ENCODE measurements at regions of chr15 and their contacts with region 1.

Region 1: DNA sequence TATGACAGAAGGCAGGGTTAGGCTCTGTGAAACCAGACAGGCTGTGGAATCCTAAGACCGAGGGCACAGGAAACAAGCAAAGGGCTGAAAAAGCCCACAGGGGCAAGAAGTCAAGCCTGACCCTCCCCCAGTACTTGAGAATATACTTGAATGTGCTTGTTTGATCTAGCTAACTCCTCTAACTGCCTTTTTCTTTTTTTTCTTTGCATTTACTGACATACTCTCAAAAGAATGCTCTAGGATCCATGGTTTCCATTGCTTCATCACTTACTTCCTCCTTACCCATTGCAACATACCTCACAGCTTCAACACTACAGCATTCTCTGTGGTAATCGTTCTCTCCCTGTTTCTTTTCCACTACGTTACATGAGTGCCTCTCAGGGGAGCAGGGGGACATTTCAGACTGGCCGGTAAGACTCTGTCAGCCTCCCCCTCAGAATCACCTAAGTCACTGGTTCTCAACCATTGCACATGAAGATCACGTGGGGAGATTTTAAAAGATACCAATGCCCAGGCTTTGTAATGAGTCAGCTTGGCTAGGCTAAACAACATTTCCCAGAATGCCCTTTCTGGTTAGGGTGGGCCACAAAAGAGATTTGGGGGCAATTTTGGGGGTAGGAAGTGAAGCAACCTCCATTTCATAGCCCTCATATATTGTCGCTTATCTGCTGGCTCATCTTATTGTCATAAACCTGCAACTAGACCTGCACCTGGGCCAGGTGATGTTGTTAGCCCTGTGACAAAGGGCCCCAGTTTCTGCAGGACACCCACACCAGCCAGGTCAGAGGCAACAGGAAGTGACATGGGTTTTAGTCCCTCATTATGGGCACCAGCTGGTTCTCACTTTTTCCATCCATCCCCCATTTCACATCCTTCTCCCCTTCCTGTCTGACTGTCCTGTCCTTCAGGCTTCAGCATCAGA is 24.6 kb upstream of the RSL24D1 start:
- DNase-seq: peak in 1 of 9 donors; percentile 26
- ATAC-seq: peak; percentile 48
- H3K4me3 ChIP-seq: no peak overlapping the region
- H3K4me3 Mint-ChIP-seq: peak overlapping the region in 5 of 10 donors; percentile 17 to 69 (median 38)
- H3K27ac ChIP-seq: no peak overlapping the region
- H3K27ac Mint-ChIP-seq: peak overlapping the region in 5 of 9 donors; percentile 11 to 87 (median 38)
- H3K4me1 ChIP-seq: peaks cover 43 to 54% of the 10 kb centered on the region in 2 donors
- H3K4me1 Mint-ChIP-seq: peaks cover 44 to 71% (median 51%) of the 10 kb centered on the region in 7 donors
- H3K27me3 ChIP-seq: no peaks in the 10 kb centered on the region
- H3K27me3 Mint-ChIP-seq: no peaks in the 10 kb centered on the region

Region 2: DNA sequence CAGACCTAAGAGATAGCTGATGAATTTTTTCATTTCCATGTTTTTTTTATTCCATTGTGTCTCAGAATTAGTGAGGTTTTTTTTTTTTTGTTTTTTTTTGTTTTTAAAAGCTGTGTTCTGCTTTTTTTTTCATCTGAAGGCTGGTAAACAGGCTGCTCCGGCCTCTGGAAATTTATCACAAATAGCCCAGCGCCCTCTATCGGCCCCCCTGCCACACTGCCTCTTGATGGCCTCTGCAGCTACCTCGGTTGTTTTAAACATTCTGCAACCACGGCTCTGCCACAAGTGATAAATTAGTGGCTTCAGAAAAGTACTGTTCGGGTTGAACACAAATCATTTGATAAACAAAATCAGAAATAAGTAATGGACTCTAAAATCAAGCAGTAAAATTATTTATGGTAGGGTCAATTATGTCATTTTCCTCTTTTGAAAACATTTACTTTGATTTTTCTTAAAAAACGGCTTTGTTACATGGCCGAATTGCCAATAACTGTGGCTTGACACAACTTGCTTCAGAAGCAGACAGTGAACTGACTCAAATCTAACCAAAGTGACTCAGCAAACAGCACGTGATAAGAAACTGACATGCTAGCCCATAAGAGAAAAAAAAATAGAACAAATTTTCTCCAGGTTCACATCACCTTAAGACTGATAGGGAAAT is 112.4 kb before region 1 on chr15:
- CTCF ChIA-PET with region 1: no interaction called
- POLR2A ChIA-PET with region 1: no interaction called
- intact Hi-C with region 1: no loop called
- DNase-seq: peak in 8 of 9 donors; percentile 4 to 54 (median 21)
- ATAC-seq: no peak
- H3K4me3 ChIP-seq: no peak overlapping the region
- H3K4me3 Mint-ChIP-seq: no peak overlapping the region
- H3K27ac ChIP-seq: no peak overlapping the region
- H3K27ac Mint-ChIP-seq: no peak overlapping the region
- H3K4me1 ChIP-seq: no peaks in the 10 kb centered on the region
- H3K4me1 Mint-ChIP-seq: no peaks in the 10 kb centered on the region
- H3K27me3 ChIP-seq: no peaks in the 10 kb centered on the region
- H3K27me3 Mint-ChIP-seq: peaks cover 0 to 8% (median 5%) of the 10 kb centered on the region in 5 donors

Region 3: GRCh38 chr15:55237219-55238130 is 16.1 kb after region 1 on chr15:
- CTCF ChIA-PET with region 1: no interaction called
- POLR2A ChIA-PET with region 1: no interaction called
- intact Hi-C with region 1: no loop called
- DNase-seq: no peak
- ATAC-seq: no peak
- H3K4me3 ChIP-seq: no peak overlapping the region
- H3K4me3 Mint-ChIP-seq: peak overlapping the region in 1 of 10 donors; percentile 44
- H3K27ac ChIP-seq: no peak overlapping the region
- H3K27ac Mint-ChIP-seq: peak overlapping the region in 1 of 9 donors; percentile 71
- H3K4me1 ChIP-seq: peaks cover 7 to 18% of the 10 kb centered on the region in 2 donors
- H3K4me1 Mint-ChIP-seq: peaks cover 6 to 51% (median 20%) of the 10 kb centered on the region in 7 donors
- H3K27me3 ChIP-seq: no peaks in the 10 kb centered on the region
- H3K27me3 Mint-ChIP-seq: no peaks in the 10 kb centered on the region

Region 4: GRCh38 chr15:55255714-55256113 is 34.4 kb after region 1 on chr15:
- CTCF ChIA-PET with region 1: interaction called, 6 read pairs
- POLR2A ChIA-PET with region 1: no interaction called
- intact Hi-C with region 1: loop called (anchors 2 to 5 kb)
- DNase-seq: peak in 2 of 9 donors; percentile 13 to 31
- ATAC-seq: peak; percentile 64
- H3K4me3 ChIP-seq: peak overlapping the region; percentile 56
- H3K4me3 Mint-ChIP-seq: peak overlapping the region; percentile 71 to 86 (median 84)
- H3K27ac ChIP-seq: peak overlapping the region; percentile 54
- H3K27ac Mint-ChIP-seq: peak overlapping the region; percentile 80 to 96 (median 89)
- H3K4me1 ChIP-seq: peaks cover 40 to 62% of the 10 kb centered on the region in 2 donors
- H3K4me1 Mint-ChIP-seq: peaks cover 45 to 67% (median 63%) of the 10 kb centered on the region in 7 donors
- H3K27me3 ChIP-seq: no peaks in the 10 kb centered on the region
- H3K27me3 Mint-ChIP-seq: no peaks in the 10 kb centered on the region

Region 5: GRCh38 chr15:55372701-55373440 is 151.5 kb after region 1 on chr15:
- CTCF ChIA-PET with region 1: no interaction called
- POLR2A ChIA-PET with region 1: no interaction called
- intact Hi-C with region 1: no loop called
- DNase-seq: no peak
- ATAC-seq: no peak
- H3K4me3 ChIP-seq: no peak overlapping the region
- H3K4me3 Mint-ChIP-seq: no peak overlapping the region
- H3K27ac ChIP-seq: no peak overlapping the region
- H3K27ac Mint-ChIP-seq: peak overlapping the region in 3 of 9 donors; percentile 0 to 9 (median 6)
- H3K4me1 ChIP-seq: no peaks in the 10 kb centered on the region
- H3K4me1 Mint-ChIP-seq: peaks cover 0 to 15% (median 0%) of the 10 kb centered on the region in 7 donors
- H3K27me3 ChIP-seq: no peaks in the 10 kb centered on the region
- H3K27me3 Mint-ChIP-seq: no peaks in the 10 kb centered on the region

Region 6: DNA sequence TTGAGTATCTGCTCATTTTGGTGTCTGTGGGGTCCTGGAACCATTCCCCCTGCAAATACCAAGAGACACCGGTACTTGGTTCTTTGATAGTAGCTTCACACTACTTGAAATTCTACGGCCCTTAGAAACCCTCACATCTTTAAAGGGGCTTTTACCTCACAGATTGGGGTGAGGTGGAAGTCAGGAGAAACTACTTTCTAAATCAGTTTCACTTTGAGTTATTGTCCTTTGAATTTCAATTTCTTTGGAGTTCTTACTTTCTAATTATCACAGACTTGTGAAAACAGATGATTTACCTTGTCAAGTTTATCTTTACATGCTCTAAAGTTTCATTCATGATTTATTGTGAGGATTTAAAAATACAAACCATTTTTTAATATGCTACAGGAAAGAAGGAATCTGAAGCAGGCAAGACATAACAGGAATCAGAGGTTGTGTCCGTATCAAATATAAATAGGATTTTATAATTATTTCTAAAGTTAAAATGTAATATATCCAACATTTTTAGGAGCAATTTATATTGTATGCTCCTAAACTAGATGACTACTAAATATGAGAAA is 673.1 kb after region 1 on chr15:
- CTCF ChIA-PET with region 1: no interaction called
- POLR2A ChIA-PET with region 1: no interaction called
- intact Hi-C with region 1: no loop called
- DNase-seq: no peak
- ATAC-seq: no peak
- H3K4me3 ChIP-seq: no peak overlapping the region
- H3K4me3 Mint-ChIP-seq: no peak overlapping the region
- H3K27ac ChIP-seq: no peak overlapping the region
- H3K27ac Mint-ChIP-seq: no peak overlapping the region
- H3K4me1 ChIP-seq: no peaks in the 10 kb centered on the region
- H3K4me1 Mint-ChIP-seq: peaks cover 4 to 14% (median 9%) of the 10 kb centered on the region in 7 donors
- H3K27me3 ChIP-seq: no peaks in the 10 kb centered on the region
- H3K27me3 Mint-ChIP-seq: peaks cover 0 to 3% (median 0%) of the 10 kb centered on the region in 5 donors